ENCODE measurements at regions of chr17 and their contacts with region 1.

Region 1: GRCh38 chr17:41548844-41549595 is 20.9 kb upstream of the KRT19 start:
- DNase-seq: peak; percentile 74
- H3K4me3 Mint-ChIP-seq: no peak overlapping the region
- H3K27ac Mint-ChIP-seq: peak overlapping the region; percentile 31
- H3K4me1 Mint-ChIP-seq: peaks cover 21% of the 10 kb centered on the region
- H3K27me3 Mint-ChIP-seq: peaks cover 10% of the 10 kb centered on the region

Region 2: DNA sequence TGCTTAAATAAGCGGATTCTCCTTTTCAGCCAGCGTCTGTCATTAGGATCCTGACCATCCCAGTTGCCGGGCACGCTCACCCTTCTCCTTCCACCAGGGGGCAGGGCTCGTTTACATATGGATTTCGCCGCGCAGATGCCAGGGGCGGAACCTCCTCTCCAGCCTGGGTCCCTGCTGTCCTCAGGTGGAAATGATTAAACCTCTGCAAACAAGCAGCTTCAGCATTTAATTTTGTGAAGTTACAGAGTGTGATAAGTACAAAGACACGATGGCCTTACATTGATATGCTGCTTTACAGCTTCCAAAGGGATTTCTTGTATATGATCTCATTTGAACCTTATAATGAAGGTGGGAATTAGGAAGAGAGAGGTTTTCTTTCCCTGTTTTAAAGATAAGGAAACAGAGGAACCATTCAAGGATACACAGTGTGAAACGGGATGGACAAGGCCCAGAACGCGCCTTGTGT is 745.4 kb before region 1 on chr17:
- intact Hi-C with region 1: loop called (anchors 5 kb)
- DNase-seq: peak; percentile 49
- H3K4me3 Mint-ChIP-seq: no peak overlapping the region
- H3K27ac Mint-ChIP-seq: no peak overlapping the region
- H3K4me1 Mint-ChIP-seq: no peaks in the 10 kb centered on the region
- H3K27me3 Mint-ChIP-seq: peaks cover 39% of the 10 kb centered on the region

Region 3: GRCh38 chr17:40857535-40857934 is 691.5 kb before region 1 on chr17:
- intact Hi-C with region 1: loop called (anchors 2 kb)
- DNase-seq: no peak
- H3K4me3 Mint-ChIP-seq: no peak overlapping the region
- H3K27ac Mint-ChIP-seq: no peak overlapping the region
- H3K4me1 Mint-ChIP-seq: no peaks in the 10 kb centered on the region
- H3K27me3 Mint-ChIP-seq: peaks cover 20% of the 10 kb centered on the region

Region 4: DNA sequence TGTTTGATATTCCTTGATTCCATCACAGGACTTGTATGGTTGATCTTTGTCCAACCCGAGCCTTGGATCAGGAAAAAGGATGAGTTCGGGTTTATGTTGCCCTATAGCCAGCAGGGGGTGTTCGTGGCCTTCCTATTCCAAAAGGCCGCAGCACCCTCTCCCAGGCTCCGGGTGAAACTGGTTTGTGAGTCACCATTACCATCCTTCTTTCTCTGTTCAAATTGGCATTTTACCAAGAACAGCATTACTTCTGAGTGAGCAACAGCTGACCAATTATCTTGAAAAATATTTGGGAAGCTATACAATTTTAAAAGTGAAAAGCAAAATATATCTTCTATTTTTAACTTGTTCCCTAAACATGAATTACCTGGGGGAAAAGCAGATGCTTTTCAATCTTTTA is 639.7 kb before region 1 on chr17:
- intact Hi-C with region 1: loop called (anchors 1 kb)
- DNase-seq: peak; percentile 29
- H3K4me3 Mint-ChIP-seq: no peak overlapping the region
- H3K27ac Mint-ChIP-seq: no peak overlapping the region
- H3K4me1 Mint-ChIP-seq: no peaks in the 10 kb centered on the region
- H3K27me3 Mint-ChIP-seq: peaks cover 26% of the 10 kb centered on the region

Region 5: DNA sequence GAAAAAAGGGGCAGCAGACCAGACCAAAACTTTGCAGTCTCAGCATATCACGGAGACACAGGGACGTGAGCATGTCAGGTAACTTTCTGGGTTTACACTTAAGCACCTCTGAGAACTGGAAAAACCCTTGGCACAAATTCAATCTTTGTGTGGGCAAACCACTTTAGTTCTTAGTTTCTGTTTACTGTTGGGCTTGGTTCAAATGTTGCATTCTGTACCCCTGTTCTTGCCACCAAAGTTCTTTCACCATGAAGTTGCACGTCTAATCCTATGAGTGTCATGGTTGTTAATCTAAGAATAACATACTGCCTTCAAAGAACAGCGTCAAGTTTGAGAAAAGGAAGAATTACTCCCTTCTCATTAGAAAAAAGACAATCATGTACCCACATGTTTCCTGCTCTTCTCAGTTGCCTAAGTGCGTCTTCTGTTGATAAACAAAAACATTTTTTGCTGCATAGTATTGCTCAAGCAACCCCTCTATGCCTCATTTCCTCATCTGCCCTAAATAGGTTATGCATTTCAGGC is 210.0 kb before region 1 on chr17:
- intact Hi-C with region 1: loop called (anchors 1 kb)
- DNase-seq: peak; percentile 36
- H3K4me3 Mint-ChIP-seq: peak overlapping the region; percentile 43
- H3K27ac Mint-ChIP-seq: peak overlapping the region; percentile 52
- H3K4me1 Mint-ChIP-seq: peaks cover 52% of the 10 kb centered on the region
- H3K27me3 Mint-ChIP-seq: peaks cover 16% of the 10 kb centered on the region

Region 6: DNA sequence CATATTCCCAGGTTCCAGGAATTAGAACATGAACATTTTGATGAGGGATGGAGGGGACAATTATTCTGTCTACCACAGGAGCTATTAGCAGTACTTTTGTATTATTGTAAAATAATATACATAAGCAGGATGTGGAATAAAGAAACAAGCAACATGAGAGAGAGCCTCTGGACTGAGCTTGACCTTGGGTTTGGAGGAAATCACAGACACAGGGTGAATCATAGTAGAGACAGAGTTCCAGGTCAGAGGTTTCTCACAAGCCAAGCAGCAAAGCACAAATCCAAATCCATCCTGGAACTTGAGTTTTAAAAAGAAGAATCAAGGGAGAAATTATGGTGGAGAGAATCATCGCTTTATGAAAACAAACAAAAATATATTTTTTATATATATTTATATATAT is 156.7 kb before region 1 on chr17:
- intact Hi-C with region 1: no loop called
- DNase-seq: no peak
- H3K4me3 Mint-ChIP-seq: no peak overlapping the region
- H3K27ac Mint-ChIP-seq: no peak overlapping the region
- H3K4me1 Mint-ChIP-seq: no peaks in the 10 kb centered on the region
- H3K27me3 Mint-ChIP-seq: peaks cover 13% of the 10 kb centered on the region

Region 7: DNA sequence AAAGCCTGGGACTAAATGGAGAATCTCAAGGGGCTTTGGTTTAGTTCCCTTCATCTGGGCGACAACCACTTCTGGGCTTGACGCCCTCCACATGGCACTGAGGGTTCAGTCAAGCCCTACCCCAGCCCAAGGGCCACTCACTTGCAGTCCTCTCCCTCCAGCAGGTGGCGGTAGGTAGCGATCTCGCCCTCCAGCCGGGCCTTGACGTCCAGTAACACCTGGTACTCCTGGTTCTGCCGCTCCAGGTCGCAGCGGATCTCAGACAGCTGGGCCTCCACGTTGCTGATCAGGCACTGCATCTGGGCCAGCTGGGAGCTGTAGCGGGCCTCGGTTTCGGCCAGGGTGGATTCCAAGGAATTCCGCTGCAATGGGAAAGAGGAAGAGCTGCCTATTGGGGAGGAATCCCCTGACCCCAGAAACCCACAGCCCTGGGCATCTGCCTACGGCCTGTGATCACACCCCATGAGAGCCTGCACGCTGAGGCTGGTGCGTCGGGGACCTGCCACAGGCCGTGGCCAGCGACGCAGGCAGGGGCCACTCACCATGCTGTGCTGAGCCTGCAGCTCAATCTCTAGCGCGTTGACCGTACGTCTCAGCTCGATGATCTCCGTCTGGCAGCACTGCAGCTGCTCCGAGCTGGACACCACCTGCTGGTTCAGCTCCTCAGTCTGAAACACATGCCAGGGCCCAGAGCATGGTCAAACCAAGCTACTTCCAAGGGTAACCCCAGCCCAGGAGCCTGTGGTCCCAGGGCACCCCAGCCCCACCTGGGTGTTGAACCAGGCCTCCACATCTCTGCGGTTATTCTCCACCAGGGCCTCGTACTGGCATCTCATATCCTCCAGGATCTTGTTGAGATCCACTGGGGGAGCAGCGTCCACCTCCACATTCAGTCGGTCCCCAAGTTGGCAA is 62.0 kb before region 1 on chr17:
- intact Hi-C with region 1: loop called (anchors 2 kb)
- DNase-seq: no peak
- H3K4me3 Mint-ChIP-seq: no peak overlapping the region
- H3K27ac Mint-ChIP-seq: no peak overlapping the region
- H3K4me1 Mint-ChIP-seq: no peaks in the 10 kb centered on the region
- H3K27me3 Mint-ChIP-seq: peaks cover 10% of the 10 kb centered on the region

Region 8: GRCh38 chr17:41579484-41580243 is 30.6 kb after region 1 on chr17:
- intact Hi-C with region 1: loop called (anchors 1 kb)
- DNase-seq: peak; percentile 62
- H3K4me3 Mint-ChIP-seq: no peak overlapping the region
- H3K27ac Mint-ChIP-seq: no peak overlapping the region
- H3K4me1 Mint-ChIP-seq: no peaks in the 10 kb centered on the region
- H3K27me3 Mint-ChIP-seq: peaks cover 23% of the 10 kb centered on the region

Measured in activated T-helper 1 cell treated with anti-CD3 and anti-CD28 coated beads, Interleukin-12 subunit alpha, Interleukin-12 subunit beta, Interleukin-2, Interleukin-4 antibody, amounts not matched to agents 30 ng/mL and 10 ng/mL and 1 ng/mL, durations not matched to agents 14 hours and 24 hours and 36 hours (primary cell).